Endothelial cell of umbilical vein (primary cell): ENCODE measurements at regions of chr2 and their contacts with region 1.

Region 1: GRCh38 chr2:203238704-203239526 is at the start of gene CYP20A1:
- DNase-seq: peak; percentile 97
- H3K4me3 ChIP-seq: peak within 1 kb of the TSS; percentile 66 to 99 (median 95)
- H3K27ac ChIP-seq: peak within 1 kb of the TSS; percentile 94
- H3K4me1 ChIP-seq: peaks cover 5% of the 10 kb centered on the region
- H3K27me3 ChIP-seq: no peaks in the 10 kb centered on the region
- CTCF ChIP-seq: peak; percentile 43 to 47
- POLR2A ChIP-seq: peak; percentile 98
- total RNA-seq, gene CYP20A1: 19.7 and 26.5 TPM in 2 replicates

Region 2: GRCh38 chr2:202577250-202578183 is 661.4 kb before region 1 on chr2:
- CTCF ChIA-PET with region 1: no interaction called
- POLR2A ChIA-PET with region 1: no interaction called
- dilution Hi-C with region 1: no loop called
- intact Hi-C with region 1: loop called (anchors 5 kb)
- DNase-seq: no peak
- H3K4me3 ChIP-seq: no peak overlapping the region
- H3K27ac ChIP-seq: no peak overlapping the region
- H3K4me1 ChIP-seq: no peaks in the 10 kb centered on the region
- H3K27me3 ChIP-seq: no peaks in the 10 kb centered on the region
- CTCF ChIP-seq: no peak
- POLR2A ChIP-seq: no peak

Region 3: DNA sequence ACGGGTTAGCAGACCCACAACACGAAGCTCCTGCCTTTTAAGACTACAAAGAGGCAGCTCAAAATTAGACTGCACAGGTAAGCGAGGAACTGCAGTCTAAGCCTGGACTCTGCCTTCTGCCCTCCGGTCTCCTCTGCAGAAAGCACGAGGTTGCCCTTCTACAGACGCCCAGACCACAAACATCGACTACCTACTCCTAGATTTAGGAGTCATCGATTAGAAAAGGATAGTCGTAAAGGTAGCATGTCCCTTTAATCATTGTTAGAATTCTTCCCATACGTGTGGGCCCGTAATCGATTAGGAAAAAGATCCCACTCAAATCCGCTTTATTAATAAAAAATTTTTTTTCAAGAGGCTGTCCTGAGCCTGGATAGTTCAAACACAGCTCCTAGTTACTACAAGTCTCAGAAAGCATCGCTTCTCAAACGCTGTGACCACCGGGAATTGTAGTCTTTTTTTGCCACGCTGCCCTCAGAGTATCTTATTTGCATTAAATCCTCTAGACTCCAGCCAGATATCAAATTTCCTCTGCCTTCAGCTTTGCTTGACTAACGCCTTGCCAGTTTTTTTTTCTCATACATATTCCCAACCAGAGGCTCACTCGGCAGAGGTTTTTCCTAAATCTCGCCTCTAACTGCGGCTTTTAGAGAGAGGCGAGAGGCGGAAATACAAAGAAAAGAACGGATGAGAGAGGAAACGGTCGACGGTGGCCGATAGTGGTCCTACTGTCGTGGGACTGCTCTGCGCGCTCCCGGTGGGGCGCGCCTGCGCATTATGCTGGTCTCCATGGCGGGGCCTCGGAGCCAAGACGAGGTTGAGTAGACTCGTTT is 327.2 kb before region 1 on chr2 and contains the starts of genes CARF and WDR12:
- CTCF ChIA-PET with region 1: no interaction called
- POLR2A ChIA-PET with region 1: no interaction called
- dilution Hi-C with region 1: no loop called
- intact Hi-C with region 1: loop called (anchors 1 kb)
- DNase-seq: peak; percentile 96
- H3K4me3 ChIP-seq: peak within 1 kb of the TSS; percentile 84 to 97 (median 97)
- H3K27ac ChIP-seq: peak within 1 kb of the TSS; percentile 86
- H3K4me1 ChIP-seq: peaks cover 7% of the 10 kb centered on the region
- H3K27me3 ChIP-seq: no peaks in the 10 kb centered on the region
- CTCF ChIP-seq: no peak
- POLR2A ChIP-seq: peak; percentile 78
- total RNA-seq, gene CARF: 3.2 and 3.7 TPM in 2 replicates
- total RNA-seq, gene WDR12: 65.6 and 67.1 TPM in 2 replicates

Region 4: DNA sequence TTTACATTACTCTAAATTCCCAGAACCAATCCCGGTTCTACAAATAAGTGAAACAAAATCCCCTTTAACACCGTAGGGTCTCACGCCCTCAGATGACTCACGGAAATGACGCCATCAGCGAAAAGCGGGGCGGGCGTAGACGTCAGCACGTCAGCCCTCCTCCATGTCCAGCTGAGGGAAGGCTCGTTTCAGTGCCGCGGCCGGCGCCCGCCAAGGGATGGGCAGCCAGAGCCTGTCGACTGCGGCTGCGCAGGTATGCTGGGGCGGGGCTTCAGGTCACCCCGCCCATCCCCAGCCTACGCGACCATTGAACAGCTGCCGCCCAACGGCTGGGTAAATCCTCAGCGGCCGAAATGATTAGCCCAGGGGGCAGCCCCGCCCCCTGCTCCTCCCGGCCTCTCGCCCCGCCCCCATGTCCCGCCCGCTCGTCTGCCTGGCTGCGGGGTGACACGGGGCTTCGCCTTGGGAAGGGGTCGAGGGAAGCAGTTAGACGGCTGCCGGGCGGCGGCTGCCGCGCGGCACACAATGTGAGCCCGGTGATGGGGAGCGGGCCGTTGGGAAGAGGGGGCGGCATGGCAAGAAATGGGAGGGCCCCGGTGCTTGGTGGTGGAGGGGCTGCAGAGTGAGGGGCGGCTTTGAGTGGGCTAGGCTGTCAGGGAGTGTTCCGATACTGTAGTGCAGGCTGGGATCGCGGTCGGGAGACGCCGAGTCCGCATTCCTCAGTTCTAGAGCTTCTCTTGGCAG is 224.3 kb before region 1 on chr2 and contains the start of gene NBEAL1:
- CTCF ChIA-PET with region 1: no interaction called
- POLR2A ChIA-PET with region 1: no interaction called
- dilution Hi-C with region 1: no loop called
- intact Hi-C with region 1: loop called (anchors 2 kb)
- DNase-seq: peak; percentile 100
- H3K4me3 ChIP-seq: peak within 1 kb of the TSS; percentile 56 to 96 (median 92)
- H3K27ac ChIP-seq: peak within 1 kb of the TSS; percentile 93
- H3K4me1 ChIP-seq: peaks cover 22% of the 10 kb centered on the region
- H3K27me3 ChIP-seq: peaks cover 8 to 13% of the 10 kb centered on the region in 2 experiments
- CTCF ChIP-seq: no peak
- POLR2A ChIP-seq: peak; percentile 66
- total RNA-seq, gene NBEAL1: 23.3 and 23.4 TPM in 2 replicates

Region 5: GRCh38 chr2:203225423-203226039 is 13.4 kb before region 1 on chr2:
- CTCF ChIA-PET with region 1: interaction called, 21 read pairs
- POLR2A ChIA-PET with region 1: interaction called, 3 read pairs
- dilution Hi-C with region 1: no loop called
- intact Hi-C with region 1: no loop called
- DNase-seq: peak; percentile 32
- H3K4me3 ChIP-seq: no peak overlapping the region
- H3K27ac ChIP-seq: no peak overlapping the region
- H3K4me1 ChIP-seq: no peaks in the 10 kb centered on the region
- H3K27me3 ChIP-seq: no peaks in the 10 kb centered on the region
- CTCF ChIP-seq: peak; percentile 51 to 66
- POLR2A ChIP-seq: no peak

Region 6: DNA sequence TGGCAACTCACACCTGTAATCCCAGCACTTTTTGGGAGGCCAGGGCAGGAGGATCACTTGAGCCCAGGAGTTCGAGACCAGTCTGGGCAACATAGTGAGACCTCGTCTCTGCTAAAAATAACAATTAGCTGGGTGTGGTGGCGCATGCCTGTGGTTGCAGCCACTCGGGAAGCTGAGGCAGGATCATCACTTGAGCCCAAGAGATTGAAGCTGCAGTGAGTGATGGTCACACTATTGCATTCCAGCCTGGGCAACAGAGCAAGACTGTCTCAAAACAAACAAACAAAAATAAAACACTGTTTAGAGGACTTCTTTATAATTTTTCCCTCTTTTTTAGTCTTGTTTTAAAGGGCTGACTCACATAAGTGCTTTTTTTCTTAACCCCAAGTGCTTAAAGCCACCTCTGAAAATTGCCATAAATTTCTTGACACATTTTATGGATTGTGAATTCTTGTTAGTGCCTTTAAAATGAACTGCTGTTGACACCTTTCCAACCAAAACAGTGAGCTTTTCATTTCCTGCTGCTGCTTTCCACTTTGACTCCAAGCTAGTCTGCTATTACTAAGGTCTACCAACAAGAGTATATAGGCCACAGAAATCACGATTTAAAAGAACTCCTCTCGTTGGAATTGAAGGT is 41.6 kb after region 1 on chr2:
- CTCF ChIA-PET with region 1: no interaction called
- POLR2A ChIA-PET with region 1: no interaction called
- dilution Hi-C with region 1: no loop called
- intact Hi-C with region 1: no loop called
- DNase-seq: peak; percentile 96
- H3K4me3 ChIP-seq: no peak overlapping the region
- H3K27ac ChIP-seq: peak overlapping the region; percentile 20
- H3K4me1 ChIP-seq: peaks cover 17% of the 10 kb centered on the region
- H3K27me3 ChIP-seq: no peaks in the 10 kb centered on the region
- CTCF ChIP-seq: no peak
- POLR2A ChIP-seq: no peak

Region 7: DNA sequence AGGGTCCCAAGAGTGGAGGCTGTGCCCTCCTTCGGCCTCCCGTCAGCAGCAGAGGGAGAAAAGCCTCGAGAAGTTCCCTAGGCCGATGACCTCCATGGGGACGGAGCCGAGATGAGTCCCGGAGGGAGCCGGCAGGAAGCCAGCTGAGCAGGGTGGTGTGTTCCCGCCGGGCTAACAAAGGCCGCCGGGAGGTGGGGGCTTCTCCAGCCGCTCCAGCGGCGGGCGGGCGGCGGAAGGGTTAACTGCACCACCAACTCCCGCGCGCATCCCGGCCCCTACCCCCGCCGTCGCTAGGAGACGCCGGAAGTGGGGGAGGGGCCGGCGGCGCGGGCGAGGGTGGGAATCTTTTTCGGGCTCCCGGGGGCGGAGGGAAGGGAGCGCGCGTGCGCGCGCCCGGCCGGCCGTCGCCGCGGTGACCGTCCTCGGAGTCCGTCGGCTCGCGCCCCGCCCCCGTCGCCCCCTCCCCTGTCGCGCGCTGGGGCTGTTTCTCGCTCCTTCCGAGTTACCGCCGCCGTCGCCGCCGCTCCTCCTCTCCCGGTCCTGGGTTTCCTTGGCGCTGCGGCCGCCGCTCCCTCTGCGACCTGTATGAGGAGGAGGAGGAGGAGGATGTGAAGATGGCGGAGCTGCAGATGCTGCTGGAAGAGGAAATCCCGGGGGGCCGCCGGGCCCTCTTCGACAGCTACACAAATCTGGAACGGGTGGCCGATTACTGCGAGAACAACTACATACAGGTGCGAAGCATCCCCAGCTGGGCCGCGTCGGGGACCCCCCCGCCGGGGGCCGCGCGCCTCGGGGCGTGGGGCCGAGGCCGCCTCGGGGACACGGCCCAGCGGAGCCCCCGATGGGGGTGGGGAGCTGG is 89.2 kb after region 1 on chr2 and contains the start of gene ABI2:
- CTCF ChIA-PET with region 1: no interaction called
- POLR2A ChIA-PET with region 1: no interaction called
- dilution Hi-C with region 1: no loop called
- intact Hi-C with region 1: loop called (anchors 1 kb)
- DNase-seq: peak; percentile 81
- H3K4me3 ChIP-seq: peak within 1 kb of the TSS; percentile 97 to 100 (median 99)
- H3K27ac ChIP-seq: peak within 1 kb of the TSS; percentile 79
- H3K4me1 ChIP-seq: peaks cover 19% of the 10 kb centered on the region
- H3K27me3 ChIP-seq: no peaks in the 10 kb centered on the region
- CTCF ChIP-seq: no peak
- POLR2A ChIP-seq: peak; percentile 81
- total RNA-seq, gene ABI2: 61.0 and 74.4 TPM in 2 replicates

Region 8: GRCh38 chr2:203535078-203535783 is 296.3 kb after region 1 on chr2 and contains the start of gene RAPH1:
- CTCF ChIA-PET with region 1: no interaction called
- POLR2A ChIA-PET with region 1: no interaction called
- dilution Hi-C with region 1: no loop called
- intact Hi-C with region 1: loop called (anchors 2 kb)
- DNase-seq: peak; percentile 85
- H3K4me3 ChIP-seq: peak within 1 kb of the TSS; percentile 93 to 100 (median 98)
- H3K27ac ChIP-seq: peak within 1 kb of the TSS; percentile 81
- H3K4me1 ChIP-seq: peaks cover 18% of the 10 kb centered on the region
- H3K27me3 ChIP-seq: no peaks in the 10 kb centered on the region
- CTCF ChIP-seq: no peak
- POLR2A ChIP-seq: peak; percentile 86
- total RNA-seq, gene RAPH1: 56.9 and 59.5 TPM in 2 replicates